ENCODE measurements at regions of chr17 and their contacts with region 1.

Region 1: DNA sequence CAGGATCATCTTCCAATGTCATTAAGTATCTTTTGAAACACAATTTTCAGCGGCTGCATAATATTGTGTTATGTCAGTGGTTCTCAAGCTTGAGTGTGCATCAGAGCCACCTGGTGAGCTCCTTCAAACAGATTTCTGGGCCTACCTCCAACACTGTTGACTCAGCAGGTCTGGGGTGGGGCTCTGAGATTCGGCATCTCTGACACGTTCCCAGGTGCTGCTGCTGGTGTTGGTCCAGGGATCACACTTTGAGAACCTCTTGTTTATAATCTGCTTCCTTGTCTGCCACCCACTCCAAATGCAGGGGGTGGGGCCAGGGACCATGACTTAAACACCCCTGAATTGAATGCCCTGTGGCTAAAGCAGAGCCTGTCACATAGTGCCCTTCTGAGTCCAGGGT is 73.8 kb upstream of the HNF1B start:
- DNase-seq: peak; percentile 88
- H3K4me3 Mint-ChIP-seq: no peak overlapping the region
- H3K27ac Mint-ChIP-seq: no peak overlapping the region
- H3K4me1 Mint-ChIP-seq: peaks cover 10% of the 10 kb centered on the region
- H3K27me3 Mint-ChIP-seq: no peaks in the 10 kb centered on the region
- CTCF ChIP-seq: no peak

Region 2: DNA sequence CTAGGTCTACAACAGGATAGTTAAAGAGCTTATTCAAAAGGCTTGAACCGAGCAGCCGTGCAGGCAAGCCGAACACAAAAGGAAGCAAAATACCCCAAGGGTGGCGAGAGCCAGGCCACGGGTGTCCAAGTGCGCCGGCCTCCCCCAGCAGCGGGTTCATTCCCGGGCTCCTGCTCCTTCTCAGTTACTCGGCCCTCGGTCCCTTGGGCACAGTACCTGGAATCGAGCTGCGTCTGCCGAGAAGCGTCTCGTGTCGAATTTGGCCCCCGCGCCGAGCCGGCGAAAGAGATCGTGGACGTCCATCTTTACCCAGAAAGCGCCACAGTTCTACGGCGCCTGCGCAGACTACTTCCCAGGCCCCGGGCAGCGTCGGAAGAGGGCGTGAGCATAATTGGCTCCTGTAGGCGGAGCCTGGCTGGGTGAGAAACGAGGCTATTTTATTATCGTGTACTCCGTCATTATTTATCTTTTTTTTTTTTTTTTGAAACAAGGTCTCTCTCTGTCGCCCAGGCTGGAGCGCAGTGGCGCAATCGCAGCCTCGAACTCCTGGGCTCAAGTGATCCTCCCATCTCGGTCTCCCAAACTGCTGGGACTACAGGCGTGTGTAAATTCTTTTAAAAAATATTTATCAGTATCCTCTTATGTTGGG is 175.4 kb before region 1 on chr17 and contains the start of gene DDX52:
- CTCF ChIA-PET with region 1: interaction called, 49 read pairs
- POLR2A ChIA-PET with region 1: interaction called, 6 read pairs
- intact Hi-C with region 1: no loop called
- DNase-seq: peak; percentile 94
- H3K4me3 Mint-ChIP-seq: peak within 1 kb of the TSS; percentile 94
- H3K27ac Mint-ChIP-seq: peak within 1 kb of the TSS; percentile 95
- H3K4me1 Mint-ChIP-seq: peaks cover 32% of the 10 kb centered on the region
- H3K27me3 Mint-ChIP-seq: peaks cover 16% of the 10 kb centered on the region
- CTCF ChIP-seq: no peak
- total RNA-seq, gene DDX52: 37.8 and 42.5 TPM in 2 replicates

Region 3: DNA sequence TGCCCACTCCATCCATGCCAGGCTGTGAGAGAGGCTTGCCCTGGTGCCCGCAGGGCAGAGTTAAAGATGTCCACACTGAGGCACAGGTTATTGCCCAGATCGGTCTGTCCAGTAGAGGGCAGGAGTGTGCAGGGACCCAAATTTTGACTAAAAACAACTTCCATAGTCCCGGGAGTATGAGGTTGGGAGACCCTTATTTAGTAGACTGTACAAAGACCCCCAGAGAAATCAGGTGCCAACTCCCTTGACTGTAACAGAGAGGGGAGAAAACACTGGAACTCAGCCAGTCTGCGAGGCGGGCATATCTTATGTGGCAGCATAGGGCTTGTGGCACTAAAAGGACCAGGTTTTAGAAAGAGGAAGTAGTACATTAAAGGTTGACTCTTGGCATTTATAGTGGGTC is 117.2 kb before region 1 on chr17:
- CTCF ChIA-PET with region 1: interaction called, 8 read pairs
- POLR2A ChIA-PET with region 1: no interaction called
- intact Hi-C with region 1: loop called (anchors 1 kb)
- DNase-seq: peak; percentile 60
- H3K4me3 Mint-ChIP-seq: no peak overlapping the region
- H3K27ac Mint-ChIP-seq: no peak overlapping the region
- H3K4me1 Mint-ChIP-seq: peaks cover 20% of the 10 kb centered on the region
- H3K27me3 Mint-ChIP-seq: no peaks in the 10 kb centered on the region
- CTCF ChIP-seq: peak; percentile 52